ENCODE measurements at regions of chr9 and their contacts with region 1.

Region 1: GRCh38 chr9:9612270-9612669 is 1000.5 kb downstream of the PTPRD start:
- DNase-seq: no peak
- ATAC-seq: peak; percentile 47
- H3K4me3 Mint-ChIP-seq: peak overlapping the region; percentile 25
- H3K27ac Mint-ChIP-seq: no peak overlapping the region
- H3K4me1 Mint-ChIP-seq: peaks cover 31% of the 10 kb centered on the region
- H3K27me3 Mint-ChIP-seq: no peaks in the 10 kb centered on the region
- CTCF ChIP-seq: no peak

Region 2: DNA sequence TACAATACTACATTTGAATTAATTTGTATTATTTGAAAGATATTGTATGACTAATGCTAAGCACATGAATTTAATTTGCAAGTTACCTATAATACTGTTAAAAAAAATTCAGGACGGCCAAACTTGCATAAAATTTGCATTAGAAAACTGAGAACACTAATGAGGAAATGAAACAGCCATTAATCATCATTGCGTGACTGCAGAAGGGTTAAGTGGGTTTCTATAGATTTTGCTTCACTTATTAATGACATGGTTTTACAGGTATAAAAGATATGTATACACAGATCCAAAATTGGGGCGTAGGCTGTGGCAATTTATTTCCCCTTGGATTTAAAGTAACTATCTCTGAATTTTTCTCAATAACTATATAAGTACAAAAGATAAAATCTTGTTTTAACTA is 117.9 kb after region 1 on chr9:
- CTCF ChIA-PET with region 1: no interaction called
- POLR2A ChIA-PET with region 1: no interaction called
- intact Hi-C with region 1: loop called (anchors 5 kb)
- DNase-seq: no peak
- ATAC-seq: peak; percentile 40
- H3K4me3 Mint-ChIP-seq: no peak overlapping the region
- H3K27ac Mint-ChIP-seq: no peak overlapping the region
- H3K4me1 Mint-ChIP-seq: peaks cover 15% of the 10 kb centered on the region
- H3K27me3 Mint-ChIP-seq: peaks cover 19% of the 10 kb centered on the region
- CTCF ChIP-seq: no peak

Measured in activated B cell treated with CpG ODN at 0.5 μM for 24 hours (primary cell).